Right lobe of liver (tissue), 6 donors: ENCODE measurements at regions of chr3 and their contacts with region 1.

Region 1: DNA sequence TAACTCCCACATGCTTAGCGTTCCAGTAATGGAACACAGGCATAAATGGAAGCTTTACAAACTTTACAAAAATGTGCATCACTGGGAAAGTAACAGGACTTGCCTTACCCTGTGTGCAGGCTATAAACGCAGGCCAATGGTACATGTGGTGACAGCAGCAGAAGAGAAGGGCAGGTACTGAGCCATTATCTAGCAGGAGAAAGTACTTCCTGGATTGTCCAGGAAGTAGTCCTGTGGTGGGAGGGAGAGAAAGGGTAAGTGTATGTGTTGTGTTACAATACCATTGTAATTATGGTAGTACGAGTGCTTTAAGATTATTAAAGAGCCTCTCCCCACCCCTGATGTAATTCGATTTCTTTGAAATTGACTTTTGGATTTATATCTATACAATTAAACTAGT is 5.3 kb downstream of the ATP1B3 start:
- DNase-seq: no peak
- ATAC-seq: no peak
- H3K4me3 ChIP-seq: no peak overlapping the region
- H3K27ac ChIP-seq: no peak overlapping the region
- H3K4me1 ChIP-seq: peaks cover 0 to 4% (median 0%) of the 10 kb centered on the region in 4 donors
- H3K27me3 ChIP-seq: no peaks in the 10 kb centered on the region
- CTCF ChIP-seq: no peak
- POLR2A ChIP-seq: no peak

Region 2: DNA sequence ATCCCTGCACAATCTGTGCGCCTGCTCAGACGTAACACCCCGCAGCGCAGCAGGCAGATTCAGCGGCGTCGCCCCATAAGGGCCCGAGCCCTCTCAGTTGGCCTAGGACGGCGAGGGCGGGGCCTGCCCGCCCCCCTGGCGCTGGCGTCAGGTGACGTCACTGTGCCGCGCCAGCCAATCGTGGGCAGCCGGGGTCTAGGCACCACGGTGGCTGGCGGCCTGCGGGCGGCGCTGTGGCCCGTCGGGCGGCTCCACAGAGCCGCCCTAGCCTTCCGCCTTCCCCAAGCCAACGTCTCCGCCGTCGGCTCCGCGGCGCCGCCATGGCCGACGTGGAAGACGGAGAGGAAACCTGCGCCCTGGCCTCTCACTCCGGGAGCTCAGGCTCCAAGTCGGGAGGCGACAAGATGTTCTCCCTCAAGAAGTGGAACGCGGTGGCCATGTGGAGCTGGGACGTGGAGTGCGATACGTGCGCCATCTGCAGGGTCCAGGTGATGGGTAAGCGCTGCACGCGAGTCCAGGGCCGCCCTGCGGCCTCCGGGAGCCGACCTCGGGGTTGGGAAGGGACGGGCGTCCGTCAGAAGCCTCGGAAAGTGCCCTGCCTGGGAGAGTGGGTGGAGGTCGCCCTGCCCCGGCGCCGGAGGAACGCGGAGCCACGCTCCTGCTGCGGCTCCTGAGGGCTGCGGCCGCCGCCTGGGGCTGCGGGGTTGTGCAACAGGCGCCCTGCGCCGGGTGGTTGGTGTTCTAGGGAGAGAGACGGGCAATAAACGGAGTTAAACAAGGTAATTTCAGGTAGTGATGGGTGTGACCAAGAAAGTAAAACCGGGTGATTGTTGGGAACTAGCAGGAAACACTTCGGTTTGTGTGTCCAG is 143.4 kb before region 1 on chr3 and contains the start of gene RNF7:
- intact Hi-C with region 1: loop called in 1 of 2 experiments (anchors 10 kb)
- DNase-seq: peak; percentile 96
- ATAC-seq: peak; percentile 96 to 98 (median 97)
- H3K4me3 ChIP-seq: peak within 1 kb of the TSS; percentile 89 to 98 (median 89)
- H3K27ac ChIP-seq: peak within 1 kb of the TSS; percentile 85 to 94 (median 90)
- H3K4me1 ChIP-seq: peaks cover 0 to 10% (median 5%) of the 10 kb centered on the region in 4 donors
- H3K27me3 ChIP-seq: no peaks in the 10 kb centered on the region
- CTCF ChIP-seq: peak; percentile 94 to 99 (median 94)
- POLR2A ChIP-seq: peak; percentile 80
- total RNA-seq, gene RNF7: 31.0 to 41.1 (median 34.2) TPM